Transverse colon (tissue), 4 donors: ENCODE measurements at regions of chr6 and their contacts with region 1.

Region 1: GRCh38 chr6:132611616-132612015 is 12.5 kb downstream of the TAAR2 start:
- DNase-seq: no peak
- H3K4me3 ChIP-seq: no peak overlapping the region
- H3K27ac ChIP-seq: no peak overlapping the region
- H3K4me1 ChIP-seq: peaks cover 0 to 13% (median 6%) of the 10 kb centered on the region in 4 donors
- H3K27me3 ChIP-seq: no peaks in the 10 kb centered on the region
- CTCF ChIP-seq: no peak
- EP300 ChIP-seq: no peak
- POLR2A ChIP-seq: no peak

Region 2: DNA sequence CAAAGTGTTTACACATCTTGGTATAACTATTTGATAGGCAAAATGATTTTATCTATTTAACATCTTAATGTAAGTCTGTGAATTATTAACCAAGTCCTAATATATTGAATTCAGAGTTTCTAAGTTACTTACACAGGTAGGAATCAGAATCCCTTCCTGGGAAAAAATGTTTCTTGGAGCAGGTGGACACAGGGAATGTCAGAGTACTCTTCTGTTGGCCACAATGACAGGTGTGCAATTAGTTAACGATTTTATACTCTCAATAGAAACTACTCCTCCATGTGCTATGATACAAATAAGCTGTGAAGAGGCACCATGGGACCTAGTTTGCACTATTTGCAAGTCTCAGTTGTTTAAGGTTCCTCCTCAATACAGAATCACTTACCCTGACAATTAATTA is 21.3 kb before region 1 on chr6:
- in situ Hi-C with region 1: no loop called
- intact Hi-C with region 1: loop called (anchors 1 kb)
- DNase-seq: no peak
- H3K4me3 ChIP-seq: no peak overlapping the region
- H3K27ac ChIP-seq: no peak overlapping the region
- H3K4me1 ChIP-seq: no peaks in the 10 kb centered on the region
- H3K27me3 ChIP-seq: no peaks in the 10 kb centered on the region
- CTCF ChIP-seq: no peak
- EP300 ChIP-seq: no peak
- POLR2A ChIP-seq: no peak

Region 3: DNA sequence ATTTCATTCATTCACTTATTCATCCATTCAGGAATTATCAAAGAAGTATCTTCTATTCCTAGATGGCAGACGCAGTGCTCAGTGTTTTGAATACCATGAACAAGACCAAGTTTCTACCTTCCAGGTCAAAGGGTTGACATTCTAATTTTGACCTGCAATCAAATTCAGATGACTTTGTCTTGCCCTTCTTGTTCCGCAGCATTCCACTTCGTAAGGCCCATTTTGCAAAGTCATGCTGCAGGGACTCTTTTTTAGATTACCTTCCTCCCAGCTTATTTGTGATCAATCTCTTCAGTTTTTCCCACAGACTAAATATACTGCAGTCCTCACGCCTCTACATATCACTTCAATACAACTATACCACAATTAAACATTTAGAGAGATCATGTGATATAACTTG is 54.5 kb after region 1 on chr6:
- in situ Hi-C with region 1: no loop called
- intact Hi-C with region 1: no loop called
- DNase-seq: no peak
- H3K4me3 ChIP-seq: no peak overlapping the region
- H3K27ac ChIP-seq: no peak overlapping the region
- H3K4me1 ChIP-seq: peaks cover 0 to 4% (median 0%) of the 10 kb centered on the region in 4 donors
- H3K27me3 ChIP-seq: no peaks in the 10 kb centered on the region
- CTCF ChIP-seq: no peak
- EP300 ChIP-seq: no peak
- POLR2A ChIP-seq: no peak

Region 4: GRCh38 chr6:132768051-132768517 is 156.5 kb after region 1 on chr6:
- in situ Hi-C with region 1: no loop called
- intact Hi-C with region 1: no loop called
- DNase-seq: peak; percentile 21
- H3K4me3 ChIP-seq: no peak overlapping the region
- H3K27ac ChIP-seq: no peak overlapping the region
- H3K4me1 ChIP-seq: no peaks in the 10 kb centered on the region
- H3K27me3 ChIP-seq: no peaks in the 10 kb centered on the region
- CTCF ChIP-seq: peak; percentile 14 to 69 (median 46)
- EP300 ChIP-seq: no peak
- POLR2A ChIP-seq: no peak